Calu3 (cell line): ENCODE measurements at regions of chr1 and their contacts with region 1.

Region 1: GRCh38 chr1:93179886-93180722 is at the start of gene TMED5:
- DNase-seq: peak; percentile 98
- H3K4me3 Mint-ChIP-seq: peak within 1 kb of the TSS; percentile 97
- H3K27ac Mint-ChIP-seq: peak within 1 kb of the TSS; percentile 96
- H3K4me1 Mint-ChIP-seq: peaks cover 37% of the 10 kb centered on the region
- H3K27me3 Mint-ChIP-seq: no peaks in the 10 kb centered on the region
- CTCF ChIP-seq: peak; percentile 12
- total RNA-seq, gene TMED5: 66.1 and 68.0 TPM in 2 replicates

Region 2: DNA sequence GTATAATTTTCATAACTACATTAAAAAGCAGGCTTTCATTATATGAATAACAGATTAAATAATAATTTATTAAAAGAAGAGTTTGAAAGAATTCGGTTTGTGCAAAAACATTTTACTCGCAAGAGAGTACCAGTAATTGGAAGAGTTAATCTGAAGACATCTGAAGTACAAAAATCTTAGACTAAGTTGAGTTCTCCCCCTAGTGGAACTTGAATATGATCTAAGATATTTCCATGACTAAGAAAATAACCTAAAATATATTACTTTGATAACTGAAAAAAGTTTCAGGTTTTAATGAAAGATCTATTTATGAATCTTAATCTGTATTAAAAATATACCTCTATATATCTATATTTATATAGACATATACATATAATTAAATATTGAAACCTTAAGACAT is 580.9 kb before region 1 on chr1:
- CTCF ChIA-PET with region 1: no interaction called
- intact Hi-C with region 1: no loop called
- DNase-seq: no peak
- H3K4me3 Mint-ChIP-seq: no peak overlapping the region
- H3K27ac Mint-ChIP-seq: no peak overlapping the region
- H3K4me1 Mint-ChIP-seq: no peaks in the 10 kb centered on the region
- H3K27me3 Mint-ChIP-seq: no peaks in the 10 kb centered on the region
- CTCF ChIP-seq: no peak

Region 3: GRCh38 chr1:93021539-93022134 is 158.5 kb before region 1 on chr1:
- CTCF ChIA-PET with region 1: interaction called, 10 read pairs
- intact Hi-C with region 1: no loop called
- DNase-seq: no peak
- H3K4me3 Mint-ChIP-seq: no peak overlapping the region
- H3K27ac Mint-ChIP-seq: no peak overlapping the region
- H3K4me1 Mint-ChIP-seq: peaks cover 5% of the 10 kb centered on the region
- H3K27me3 Mint-ChIP-seq: peaks cover 32% of the 10 kb centered on the region
- CTCF ChIP-seq: peak; percentile 67

Region 4: GRCh38 chr1:93080179-93080823 is 99.8 kb before region 1 on chr1:
- CTCF ChIA-PET with region 1: interaction called, 3 read pairs
- intact Hi-C with region 1: loop called (anchors 5 kb)
- DNase-seq: no peak
- H3K4me3 Mint-ChIP-seq: peak overlapping the region; percentile 84
- H3K27ac Mint-ChIP-seq: peak overlapping the region; percentile 74
- H3K4me1 Mint-ChIP-seq: peaks cover 10% of the 10 kb centered on the region
- H3K27me3 Mint-ChIP-seq: no peaks in the 10 kb centered on the region
- CTCF ChIP-seq: no peak

Region 5: DNA sequence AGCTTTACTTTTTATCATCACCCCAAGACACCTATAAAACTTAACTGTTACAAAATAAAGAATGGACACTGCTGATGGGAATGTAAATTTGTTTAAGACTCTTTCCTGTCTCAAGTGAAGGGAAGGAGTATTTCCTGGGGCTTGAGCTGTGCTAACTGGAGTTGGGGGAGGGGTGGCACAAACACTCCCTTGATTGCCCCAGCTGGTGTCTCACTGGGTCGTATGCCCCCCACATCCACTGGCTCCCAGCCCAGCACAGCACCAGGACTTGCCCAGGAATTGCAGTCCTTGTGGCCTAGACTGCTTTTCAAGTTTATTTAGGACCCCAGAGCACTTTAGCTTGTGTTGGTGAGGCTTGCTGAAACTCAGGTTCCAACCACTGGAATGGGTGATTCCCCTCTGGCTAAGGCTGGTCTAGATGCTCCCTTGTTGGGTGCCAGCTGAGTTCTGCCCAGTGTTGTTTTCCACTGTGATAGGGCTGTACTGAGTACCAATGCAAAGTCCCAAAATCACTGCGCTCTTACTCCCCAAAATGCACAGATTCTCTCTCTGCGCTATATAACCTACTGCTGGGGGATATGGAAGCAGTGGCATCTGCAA is 116.6 kb after region 1 on chr1:
- CTCF ChIA-PET with region 1: no interaction called
- intact Hi-C with region 1: no loop called
- DNase-seq: no peak
- H3K4me3 Mint-ChIP-seq: no peak overlapping the region
- H3K27ac Mint-ChIP-seq: no peak overlapping the region
- H3K4me1 Mint-ChIP-seq: no peaks in the 10 kb centered on the region
- H3K27me3 Mint-ChIP-seq: no peaks in the 10 kb centered on the region
- CTCF ChIP-seq: no peak

Region 6: DNA sequence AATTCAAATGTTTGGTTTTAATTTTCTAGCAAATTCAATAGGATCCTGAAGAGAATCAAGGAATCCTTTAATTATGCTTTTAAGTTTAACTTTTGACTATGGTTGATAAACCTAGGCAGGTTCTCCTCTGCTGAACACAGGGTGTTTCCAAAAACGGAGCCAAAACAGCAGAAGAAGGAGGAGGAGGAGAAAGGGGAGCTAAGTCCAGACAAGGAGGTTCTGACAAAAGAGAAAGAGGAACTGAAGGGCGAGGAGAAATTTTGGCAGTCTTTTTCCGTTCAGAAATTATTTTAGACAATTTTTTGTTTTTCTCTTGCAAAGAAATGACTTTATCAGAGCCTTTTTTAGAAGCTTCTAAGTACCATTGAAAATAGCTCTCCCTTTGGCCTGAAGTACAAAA is 234.6 kb after region 1 on chr1:
- CTCF ChIA-PET with region 1: no interaction called
- intact Hi-C with region 1: no loop called
- DNase-seq: no peak
- H3K4me3 Mint-ChIP-seq: no peak overlapping the region
- H3K27ac Mint-ChIP-seq: peak overlapping the region; percentile 6
- H3K4me1 Mint-ChIP-seq: no peaks in the 10 kb centered on the region
- H3K27me3 Mint-ChIP-seq: no peaks in the 10 kb centered on the region
- CTCF ChIP-seq: no peak